ENCODE measurements at regions of chr16 and their contacts with region 1.

Region 1: GRCh38 chr16:86252596-86252995 is 257.7 kb upstream of the FOXF1 start:
- DNase-seq: no peak
- H3K4me3 ChIP-seq: no peak overlapping the region
- H3K27me3 ChIP-seq: peaks cover 5% of the 10 kb centered on the region
- CTCF ChIP-seq: peak; percentile 49

Region 2: GRCh38 chr16:86242244-86243122 is 10.1 kb before region 1 on chr16:
- CTCF ChIA-PET with region 1: interaction called, 13 read pairs
- POLR2A ChIA-PET with region 1: no interaction called
- DNase-seq: no peak
- H3K4me3 ChIP-seq: no peak overlapping the region
- H3K27me3 ChIP-seq: peaks cover 39% of the 10 kb centered on the region
- CTCF ChIP-seq: no peak

Measured in BJ (cell line).